Kidney (tissue), 22 donors: ENCODE measurements at regions of chr7 and their contacts with region 1.

Region 1: DNA sequence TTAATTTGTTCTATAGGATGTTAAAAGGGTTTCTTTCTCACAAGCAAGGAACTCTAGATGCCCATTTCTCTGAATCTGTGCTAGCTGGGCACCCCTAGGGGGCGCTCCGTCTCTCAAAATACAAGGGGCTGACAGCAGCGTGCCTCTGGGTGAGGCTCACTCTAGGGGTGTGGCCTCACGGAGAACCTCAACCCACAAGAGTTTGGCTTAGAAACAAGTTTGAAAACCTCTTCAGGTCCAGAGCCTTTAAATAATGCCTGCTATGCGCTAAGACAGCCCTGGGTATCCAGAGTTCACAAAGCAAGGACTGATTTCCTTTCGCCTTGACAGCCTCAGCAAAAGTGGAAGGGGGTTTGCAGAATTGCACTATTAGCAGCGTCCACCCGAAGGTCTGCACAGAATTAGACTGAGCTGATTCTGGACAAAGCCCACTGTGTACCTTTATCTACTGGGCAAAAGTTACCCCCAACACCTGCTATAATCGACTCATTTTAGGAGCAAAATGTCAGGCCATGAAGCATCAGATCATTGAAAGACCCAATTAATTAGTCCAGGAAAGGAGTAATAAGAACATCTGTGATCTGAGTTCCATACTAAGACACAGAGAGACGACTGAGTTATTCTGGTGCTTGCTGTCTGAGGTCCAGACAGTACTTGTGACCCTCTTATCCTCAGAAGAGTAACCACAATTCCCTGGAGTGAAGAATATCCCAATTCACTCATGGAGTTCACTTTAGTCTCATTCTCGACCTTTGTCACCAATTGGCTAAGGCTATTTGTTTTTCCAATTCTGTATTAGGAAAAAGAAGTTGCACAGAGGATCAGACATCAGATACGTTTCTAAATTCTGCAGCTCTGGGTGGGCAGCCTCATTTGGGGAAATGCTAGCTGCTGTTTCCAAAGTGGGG is 574 bp upstream of the CPED1 start:
- DNase-seq: peak; percentile 88 to 96 (median 91)
- H3K4me3 ChIP-seq: peak overlapping the region; percentile 59 to 69 (median 62)
- H3K27ac ChIP-seq: peak overlapping the region; percentile 68 to 94
- H3K4me1 ChIP-seq: peaks cover 0 to 5% (median 3%) of the 10 kb centered on the region in 3 donors
- H3K27me3 ChIP-seq: no peaks in the 10 kb centered on the region
- CTCF ChIP-seq: peak; percentile 82

Region 2: DNA sequence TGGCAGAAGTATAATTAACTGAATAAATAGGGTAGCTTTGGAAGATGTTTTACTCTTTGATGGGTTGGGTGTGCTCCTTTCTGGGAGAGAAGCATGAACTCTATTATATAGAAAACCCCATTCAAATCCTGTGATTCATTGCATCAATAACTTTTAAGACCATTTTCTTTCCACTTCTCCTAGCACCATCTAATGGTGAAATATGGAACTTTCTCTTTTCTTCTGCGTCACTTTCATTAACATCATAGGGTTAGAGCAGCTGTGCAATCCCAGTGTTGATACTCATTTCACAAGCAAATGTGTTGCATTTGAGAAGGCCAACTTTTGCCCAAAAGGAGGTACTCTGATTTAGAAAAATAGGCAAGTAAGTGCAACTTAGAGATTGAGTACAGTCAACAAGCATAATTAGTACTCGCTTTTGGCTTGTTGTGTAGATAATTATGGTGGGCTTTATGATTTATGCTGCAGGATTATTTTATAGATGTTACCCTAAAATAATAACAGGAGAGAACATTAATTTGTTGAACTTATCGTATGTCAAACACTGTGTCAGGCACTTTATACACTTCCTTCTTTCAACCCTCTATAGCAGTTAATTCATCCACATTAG is 93.5 kb after region 1 on chr7:
- intact Hi-C with region 1: loop called (anchors 5 kb)
- DNase-seq: peak in 2 of 5 donors; percentile 79 to 82
- H3K4me3 ChIP-seq: no peak overlapping the region
- H3K27ac ChIP-seq: no peak overlapping the region
- H3K4me1 ChIP-seq: peaks cover 0 to 2% (median 0%) of the 10 kb centered on the region in 3 donors
- H3K27me3 ChIP-seq: no peaks in the 10 kb centered on the region
- CTCF ChIP-seq: peak; percentile 63

Region 3: GRCh38 chr7:121107923-121108498 is 120.1 kb after region 1 on chr7:
- intact Hi-C with region 1: loop called (anchors 10 kb)
- DNase-seq: peak in 2 of 5 donors; percentile 76 to 78
- H3K4me3 ChIP-seq: no peak overlapping the region
- H3K27ac ChIP-seq: no peak overlapping the region
- H3K4me1 ChIP-seq: no peaks in the 10 kb centered on the region
- H3K27me3 ChIP-seq: no peaks in the 10 kb centered on the region
- CTCF ChIP-seq: peak; percentile 73

Region 4: DNA sequence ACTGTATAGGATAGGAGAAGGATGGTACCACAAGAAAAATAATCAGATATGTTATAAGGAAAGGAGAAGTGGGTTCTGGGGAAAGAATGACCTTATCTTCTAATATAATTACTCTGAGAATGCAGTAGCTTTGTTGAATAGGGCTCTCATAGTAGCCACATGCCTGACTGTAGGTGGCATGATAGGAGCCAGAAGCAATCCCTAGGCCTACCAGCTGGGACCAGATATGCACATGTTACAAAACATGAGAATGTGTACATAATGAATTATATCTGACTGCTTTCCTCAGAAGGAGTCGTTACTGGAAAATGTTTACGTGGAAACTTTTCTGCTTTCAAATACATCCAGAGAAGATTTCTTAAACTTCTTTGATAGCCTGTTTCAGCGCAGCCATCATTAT is 461.4 kb after region 1 on chr7:
- intact Hi-C with region 1: no loop called
- DNase-seq: peak in 1 of 5 donors; percentile 52
- H3K4me3 ChIP-seq: no peak overlapping the region
- H3K27ac ChIP-seq: no peak overlapping the region
- H3K4me1 ChIP-seq: no peaks in the 10 kb centered on the region
- H3K27me3 ChIP-seq: no peaks in the 10 kb centered on the region
- CTCF ChIP-seq: no peak